PC-9 (cell line): ENCODE measurements at regions of chr10 and their contacts with region 1.

Region 1: GRCh38 chr10:22365233-22365632 is 19.9 kb downstream of the SPAG6 start:
- DNase-seq: no peak
- H3K4me3 ChIP-seq: no peak overlapping the region
- H3K27ac ChIP-seq: no peak overlapping the region
- H3K4me1 ChIP-seq: no peaks in the 10 kb centered on the region
- H3K27me3 ChIP-seq: no peaks in the 10 kb centered on the region
- CTCF ChIP-seq: no peak

Region 2: DNA sequence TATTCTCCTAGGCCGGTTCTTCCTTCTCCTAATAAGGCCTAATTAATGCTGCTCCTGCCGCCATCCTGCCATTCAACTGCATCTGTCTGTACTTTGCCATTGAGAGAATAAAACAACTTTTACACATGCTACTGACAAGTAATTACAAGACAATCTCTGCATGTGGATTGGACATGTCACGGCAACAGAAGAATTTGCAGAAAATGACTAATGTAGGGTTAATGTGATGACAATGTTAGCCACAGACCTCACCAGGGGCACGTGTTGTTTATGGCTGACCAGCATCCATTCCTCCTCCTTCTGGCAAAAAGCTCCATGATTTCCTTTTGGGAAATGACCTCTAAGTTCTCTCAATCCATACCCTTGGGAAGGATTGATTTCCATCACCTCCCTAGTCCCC is 1526.1 kb before region 1 on chr10:
- CTCF ChIA-PET with region 1: no interaction called
- POLR2A ChIA-PET with region 1: no interaction called
- intact Hi-C with region 1: no loop called
- DNase-seq: no peak
- H3K4me3 ChIP-seq: no peak overlapping the region
- H3K27ac ChIP-seq: no peak overlapping the region
- H3K4me1 ChIP-seq: no peaks in the 10 kb centered on the region
- H3K27me3 ChIP-seq: no peaks in the 10 kb centered on the region
- CTCF ChIP-seq: no peak

Region 3: GRCh38 chr10:22415072-22415471 is 49.8 kb after region 1 on chr10:
- CTCF ChIA-PET with region 1: no interaction called
- POLR2A ChIA-PET with region 1: interaction called, 10 read pairs
- intact Hi-C with region 1: no loop called
- DNase-seq: no peak
- H3K4me3 ChIP-seq: no peak overlapping the region
- H3K27ac ChIP-seq: no peak overlapping the region
- H3K4me1 ChIP-seq: no peaks in the 10 kb centered on the region
- H3K27me3 ChIP-seq: no peaks in the 10 kb centered on the region
- CTCF ChIP-seq: no peak

Region 4: GRCh38 chr10:22436884-22437619 is 71.8 kb after region 1 on chr10:
- CTCF ChIA-PET with region 1: no interaction called
- POLR2A ChIA-PET with region 1: no interaction called
- intact Hi-C with region 1: no loop called
- DNase-seq: peak; percentile 61 to 62
- H3K4me3 ChIP-seq: peak overlapping the region; percentile 82
- H3K27ac ChIP-seq: peak overlapping the region; percentile 48
- H3K4me1 ChIP-seq: peaks cover 37% of the 10 kb centered on the region
- H3K27me3 ChIP-seq: no peaks in the 10 kb centered on the region
- CTCF ChIP-seq: no peak

Region 5: DNA sequence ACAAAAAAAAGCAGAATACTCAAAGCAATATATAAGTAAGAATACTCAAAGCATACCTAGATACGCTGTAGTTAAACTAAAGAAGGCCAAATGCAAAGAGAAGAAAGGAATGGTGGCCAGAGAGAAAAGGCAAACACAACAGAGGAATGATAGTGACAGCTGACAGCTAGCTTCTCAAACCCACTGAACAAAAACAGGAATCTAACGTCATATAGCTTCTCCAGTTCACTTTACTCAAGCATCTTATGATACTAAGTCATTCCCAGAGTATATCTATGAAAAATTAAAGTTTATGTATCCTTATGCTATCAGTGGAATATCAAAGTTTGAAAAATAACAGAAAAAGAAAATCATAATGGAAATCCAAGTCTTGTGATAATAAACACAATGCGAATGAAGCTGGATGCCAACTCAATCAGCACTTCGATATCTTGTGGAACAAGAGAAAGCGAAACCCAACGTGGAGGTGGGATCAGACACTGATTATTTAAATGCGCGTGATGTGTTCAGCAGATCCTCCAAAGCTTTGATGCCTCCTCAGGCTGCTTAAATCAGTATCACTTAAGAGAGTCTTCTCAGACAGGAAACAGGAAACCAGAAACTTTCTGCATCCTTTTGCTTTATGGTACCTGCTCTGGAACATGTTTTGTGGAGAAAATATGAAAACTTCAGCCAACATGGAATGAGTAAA is 246.3 kb after region 1 on chr10:
- CTCF ChIA-PET with region 1: no interaction called
- POLR2A ChIA-PET with region 1: interaction called, 11 read pairs
- intact Hi-C with region 1: no loop called
- DNase-seq: no peak
- H3K4me3 ChIP-seq: no peak overlapping the region
- H3K27ac ChIP-seq: no peak overlapping the region
- H3K4me1 ChIP-seq: no peaks in the 10 kb centered on the region
- H3K27me3 ChIP-seq: no peaks in the 10 kb centered on the region
- CTCF ChIP-seq: no peak